Ascending aorta (tissue), 2 donors: ENCODE measurements at regions of chr17 and their contacts with region 1.

Region 1: DNA sequence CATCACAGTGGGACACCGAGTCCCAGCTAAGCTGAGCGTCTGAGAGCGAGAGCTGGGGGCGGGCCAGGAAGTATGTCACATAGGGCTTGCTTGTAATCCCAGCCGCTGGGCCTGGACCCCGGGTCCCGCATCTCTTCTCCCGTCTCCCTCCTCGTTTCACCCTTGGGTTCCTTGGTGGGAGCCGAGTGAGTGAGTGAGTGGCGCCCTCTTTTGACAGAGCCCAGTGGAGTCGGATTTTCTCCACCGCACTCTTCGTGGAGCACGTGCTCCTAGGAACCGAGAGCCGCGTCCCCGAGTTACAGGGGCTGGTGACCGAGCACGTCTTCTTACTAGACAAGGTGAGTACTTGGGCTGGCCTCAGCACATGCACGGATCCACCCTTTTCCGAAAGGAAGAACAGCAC is 50.8 kb upstream of the ENDOV start:
- DNase-seq: no peak
- H3K4me3 ChIP-seq: no peak overlapping the region
- H3K27ac ChIP-seq: no peak overlapping the region
- H3K4me1 ChIP-seq: no peaks in the 10 kb centered on the region
- H3K27me3 ChIP-seq: no peaks in the 10 kb centered on the region
- CTCF ChIP-seq: peak in 1 of 3 experiments; percentile 23

Region 2: DNA sequence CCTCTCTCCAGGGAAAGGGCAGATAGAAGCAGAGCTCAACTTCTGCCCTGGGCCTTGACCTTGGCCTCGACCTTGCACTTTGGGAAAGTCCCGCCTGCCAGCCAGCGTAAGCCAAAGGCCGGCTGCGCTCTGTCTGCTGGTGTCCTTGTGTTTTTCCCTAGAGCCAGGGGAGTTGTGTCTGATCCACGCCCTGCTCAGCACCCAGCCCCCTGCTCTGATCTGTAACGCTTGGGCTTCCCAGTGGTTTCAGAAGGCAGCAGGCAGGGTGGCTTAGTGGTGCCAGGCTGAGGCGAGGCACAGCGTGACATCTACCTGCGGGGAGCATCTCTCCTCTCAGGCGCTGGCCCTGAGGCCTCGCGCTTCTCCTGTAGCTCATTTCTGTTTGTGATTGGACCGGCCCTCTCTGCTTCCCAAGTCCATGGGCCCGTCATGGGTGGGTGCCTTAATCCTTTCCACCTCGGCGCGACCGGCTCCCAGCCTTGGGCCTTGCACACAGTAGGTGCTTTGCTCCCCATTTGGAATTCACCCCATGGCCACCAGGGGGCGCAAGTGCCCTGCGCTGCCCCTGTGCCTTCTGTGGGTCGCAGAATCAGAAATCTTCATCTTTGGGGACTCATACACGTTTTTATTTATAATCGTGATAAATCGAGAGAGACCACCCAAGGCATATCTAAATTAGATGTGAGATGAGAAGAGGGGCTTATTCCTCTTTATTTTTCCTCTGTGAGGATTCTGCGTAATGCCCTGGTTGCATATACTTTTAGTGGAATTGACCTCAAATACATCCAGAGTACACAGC is 168.3 kb before region 1 on chr17:
- intact Hi-C with region 1: loop called (anchors 10 kb)
- DNase-seq: no peak
- H3K4me3 ChIP-seq: no peak overlapping the region
- H3K27ac ChIP-seq: no peak overlapping the region
- H3K4me1 ChIP-seq: no peaks in the 10 kb centered on the region
- H3K27me3 ChIP-seq: no peaks in the 10 kb centered on the region
- CTCF ChIP-seq: peak; percentile 83 to 84 (median 84)

Region 3: DNA sequence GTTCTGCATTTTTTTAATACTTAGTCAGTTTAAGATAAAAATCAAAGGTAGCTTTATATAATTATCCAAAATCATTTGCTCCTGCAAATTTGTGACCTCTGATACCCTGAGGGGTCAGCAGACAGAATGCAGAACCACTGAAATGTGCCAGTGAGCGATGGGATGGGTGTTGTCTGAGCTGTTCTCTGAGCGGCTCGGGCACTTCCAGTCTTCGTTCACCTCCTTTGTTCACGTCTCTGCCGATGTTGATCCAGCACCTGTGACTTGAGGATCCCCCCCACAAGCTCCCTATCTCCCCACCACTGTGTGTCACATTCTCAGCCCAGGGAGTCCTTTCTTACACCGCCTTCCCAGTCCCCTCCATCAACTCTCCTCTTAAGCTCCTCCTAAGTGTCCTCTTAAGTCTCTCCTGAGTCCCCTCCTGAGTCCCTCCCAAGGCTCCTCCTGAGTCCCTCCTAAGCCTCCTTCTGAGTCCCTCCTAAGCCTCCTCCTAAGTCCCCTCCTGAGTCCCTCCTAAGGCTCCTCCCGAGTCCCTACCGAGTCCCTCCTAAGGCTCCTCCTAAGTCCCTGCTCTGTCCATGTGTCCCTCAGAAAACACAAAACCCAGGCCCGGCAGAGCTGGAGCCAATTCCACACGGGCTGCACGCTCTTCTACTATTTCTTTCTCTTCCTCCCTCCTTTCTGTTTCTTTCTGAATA is 56.1 kb before region 1 on chr17:
- intact Hi-C with region 1: no loop called
- DNase-seq: no peak
- H3K4me3 ChIP-seq: no peak overlapping the region
- H3K27ac ChIP-seq: no peak overlapping the region
- H3K4me1 ChIP-seq: no peaks in the 10 kb centered on the region
- H3K27me3 ChIP-seq: no peaks in the 10 kb centered on the region
- CTCF ChIP-seq: no peak